Testis (tissue), 5 donors: ENCODE measurements at regions of chr12 and their contacts with region 1.

Region 1: DNA sequence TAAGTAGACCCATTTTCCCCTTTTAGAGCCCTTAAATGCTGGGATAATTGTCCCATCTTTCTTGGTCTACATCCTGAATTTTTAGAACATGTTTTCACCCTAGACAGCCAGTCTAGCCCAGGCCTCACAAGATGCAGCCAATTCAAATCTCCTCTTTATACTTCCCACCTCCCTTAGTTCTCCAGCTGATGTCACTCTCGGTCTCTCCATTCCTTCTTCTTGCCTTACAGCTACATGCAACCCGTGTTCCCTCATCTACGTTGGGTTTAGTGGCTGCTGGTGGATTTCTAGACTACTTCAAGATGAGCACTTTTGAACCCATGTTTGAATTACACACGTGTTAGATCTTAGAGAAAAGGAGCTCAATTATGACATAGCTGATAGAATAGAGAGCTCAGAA is 132.0 kb downstream of the PPM1H start:
- DNase-seq: no peak
- H3K4me3 ChIP-seq: no peak overlapping the region
- H3K27ac ChIP-seq: no peak overlapping the region
- H3K4me1 ChIP-seq: no peaks in the 10 kb centered on the region
- H3K27me3 ChIP-seq: no peaks in the 10 kb centered on the region
- CTCF ChIP-seq: no peak
- POLR2A ChIP-seq: no peak

Region 2: GRCh38 chr12:62435303-62436163 is 367.5 kb before region 1 on chr12:
- intact Hi-C with region 1: loop called (anchors 5 kb)
- DNase-seq: peak; percentile 69
- H3K4me3 ChIP-seq: peak overlapping the region; percentile 42 to 45
- H3K27ac ChIP-seq: no peak overlapping the region
- H3K4me1 ChIP-seq: no peaks in the 10 kb centered on the region
- H3K27me3 ChIP-seq: no peaks in the 10 kb centered on the region
- CTCF ChIP-seq: peak in 2 of 3 experiments; percentile 26 to 47
- POLR2A ChIP-seq: no peak